ENCODE measurements at regions of chr16 and their contacts with region 1.

Region 1: GRCh38 chr16:22206013-22206841 is at the start of gene EEF2K:
- DNase-seq: peak; percentile 94 to 95
- H3K4me3 ChIP-seq: peak within 1 kb of the TSS; percentile 91
- H3K4me3 Mint-ChIP-seq: peak within 1 kb of the TSS; percentile 99
- H3K27ac Mint-ChIP-seq: peak within 1 kb of the TSS; percentile 54
- H3K4me1 ChIP-seq: 0 out of 2 replicates have a peak, but pooled peaks cover 7% of the 10 kb centered on the region
- H3K4me1 Mint-ChIP-seq: peaks cover 7% of the 10 kb centered on the region
- H3K27me3 ChIP-seq: no peaks in the 10 kb centered on the region
- H3K27me3 Mint-ChIP-seq: no peaks in the 10 kb centered on the region
- CTCF ChIP-seq: peak; percentile 71 to 74
- total RNA-seq, gene EEF2K: 17.5 and 20.1 TPM in 2 replicates

Region 2: DNA sequence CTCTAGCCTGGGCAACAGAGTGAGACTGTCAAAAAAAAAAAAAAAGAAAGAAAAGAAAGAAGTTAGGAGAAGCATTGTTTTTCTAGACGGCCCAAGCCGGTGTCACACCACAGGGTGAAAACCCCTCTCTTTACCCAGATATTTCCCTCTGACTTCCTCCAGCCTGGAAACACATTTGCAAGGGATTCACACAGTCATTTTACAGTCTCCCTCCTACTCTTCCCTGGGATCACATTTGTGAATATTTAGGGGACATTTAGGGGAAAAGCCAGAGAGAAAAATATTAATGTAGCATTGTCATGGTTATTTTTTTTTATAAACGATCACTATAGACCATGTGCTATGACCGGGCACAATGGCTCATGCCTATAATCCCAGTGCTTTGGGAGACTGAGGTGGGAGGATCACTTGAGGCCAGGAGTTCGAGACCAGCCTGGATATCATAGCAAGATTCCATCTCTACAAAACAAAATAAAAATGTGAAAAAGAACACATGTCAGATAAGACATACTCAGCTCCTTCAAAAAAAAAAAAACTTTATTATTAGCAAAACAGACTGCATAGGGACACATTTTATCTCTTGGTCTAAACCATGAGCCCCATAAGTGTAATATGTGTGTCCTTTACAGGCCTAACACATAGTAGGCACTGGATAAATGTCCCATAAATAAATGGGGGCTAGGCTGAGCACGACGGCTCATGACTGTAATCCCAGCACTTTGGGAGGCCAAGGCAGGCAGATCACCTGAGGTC is 54.8 kb before region 1 on chr16:
- CTCF ChIA-PET with region 1: no interaction called
- POLR2A ChIA-PET with region 1: no interaction called
- intact Hi-C with region 1: no loop called
- DNase-seq: no peak
- H3K4me3 ChIP-seq: no peak overlapping the region
- H3K4me3 Mint-ChIP-seq: no peak overlapping the region
- H3K27ac Mint-ChIP-seq: no peak overlapping the region
- H3K4me1 ChIP-seq: no peaks in the 10 kb centered on the region
- H3K4me1 Mint-ChIP-seq: no peaks in the 10 kb centered on the region
- H3K27me3 ChIP-seq: no peaks in the 10 kb centered on the region
- H3K27me3 Mint-ChIP-seq: no peaks in the 10 kb centered on the region
- CTCF ChIP-seq: no peak

Region 3: GRCh38 chr16:22217889-22218730 is 11.9 kb after region 1 on chr16:
- CTCF ChIA-PET with region 1: no interaction called
- POLR2A ChIA-PET with region 1: no interaction called
- intact Hi-C with region 1: no loop called
- DNase-seq: peak; percentile 32 to 54
- H3K4me3 ChIP-seq: no peak overlapping the region
- H3K4me3 Mint-ChIP-seq: no peak overlapping the region
- H3K27ac Mint-ChIP-seq: peak overlapping the region; percentile 57
- H3K4me1 ChIP-seq: no peaks in the 10 kb centered on the region
- H3K4me1 Mint-ChIP-seq: no peaks in the 10 kb centered on the region
- H3K27me3 ChIP-seq: no peaks in the 10 kb centered on the region
- H3K27me3 Mint-ChIP-seq: no peaks in the 10 kb centered on the region
- CTCF ChIP-seq: no peak

Region 4: DNA sequence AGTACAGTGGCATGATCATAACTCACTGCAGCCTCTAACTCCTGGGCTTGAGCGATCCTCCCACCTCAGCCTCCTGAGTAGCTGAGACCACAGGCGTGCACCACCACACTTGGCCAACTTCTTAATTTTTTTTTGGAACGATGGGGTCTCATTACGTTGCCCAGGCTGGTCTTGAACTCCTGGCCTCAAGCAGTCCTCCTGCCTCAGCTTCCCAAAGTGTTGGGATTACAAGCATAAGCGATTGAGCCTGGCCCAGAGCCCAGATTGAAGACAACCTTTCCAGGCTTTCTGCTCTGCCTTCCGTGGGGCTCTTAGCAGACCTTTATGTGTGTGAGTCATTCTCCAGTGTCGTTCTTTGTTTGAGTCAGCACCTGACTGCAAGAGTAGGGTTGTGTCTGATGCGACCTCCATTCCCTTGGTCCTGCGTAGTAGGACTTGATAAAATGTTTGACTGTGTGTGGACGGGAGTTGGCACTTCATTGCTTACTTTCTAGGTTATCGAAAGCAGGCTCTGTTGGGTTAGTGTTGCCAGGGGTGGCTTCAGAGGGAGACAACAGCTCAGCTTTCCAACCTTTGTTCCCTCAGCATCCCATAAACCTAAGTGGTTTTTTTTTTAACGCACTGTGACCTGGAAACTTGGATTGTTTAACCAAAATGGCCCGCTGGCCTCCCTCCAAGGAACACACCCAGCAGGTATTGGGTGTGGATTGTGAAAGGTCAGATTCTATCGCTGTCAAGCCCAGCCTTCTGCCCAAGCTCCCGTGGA is 26.2 kb after region 1 on chr16:
- CTCF ChIA-PET with region 1: interaction called, 3 read pairs
- POLR2A ChIA-PET with region 1: no interaction called
- intact Hi-C with region 1: loop called (anchors 2 kb)
- DNase-seq: peak; percentile 21 to 54
- H3K4me3 ChIP-seq: no peak overlapping the region
- H3K4me3 Mint-ChIP-seq: no peak overlapping the region
- H3K27ac Mint-ChIP-seq: no peak overlapping the region
- H3K4me1 ChIP-seq: 0 out of 2 replicates have a peak, but pooled peaks cover 6% of the 10 kb centered on the region
- H3K4me1 Mint-ChIP-seq: no peaks in the 10 kb centered on the region
- H3K27me3 ChIP-seq: no peaks in the 10 kb centered on the region
- H3K27me3 Mint-ChIP-seq: no peaks in the 10 kb centered on the region
- CTCF ChIP-seq: no peak

Region 5: GRCh38 chr16:22297114-22297878 is 91.1 kb after region 1 on chr16 and contains the start of gene POLR3E:
- CTCF ChIA-PET with region 1: interaction called, 5 read pairs
- POLR2A ChIA-PET with region 1: interaction called, 4 read pairs
- intact Hi-C with region 1: loop called (anchors 1 kb)
- DNase-seq: peak; percentile 96 to 99
- H3K4me3 ChIP-seq: peak within 1 kb of the TSS; percentile 77
- H3K4me3 Mint-ChIP-seq: peak within 1 kb of the TSS; percentile 82
- H3K27ac Mint-ChIP-seq: peak within 1 kb of the TSS; percentile 83
- H3K4me1 ChIP-seq: peaks cover 5% of the 10 kb centered on the region
- H3K4me1 Mint-ChIP-seq: peaks cover 13% of the 10 kb centered on the region
- H3K27me3 ChIP-seq: no peaks in the 10 kb centered on the region
- H3K27me3 Mint-ChIP-seq: no peaks in the 10 kb centered on the region
- CTCF ChIP-seq: peak; percentile 85 to 88
- total RNA-seq, gene POLR3E: 68.7 and 70.8 TPM in 2 replicates